CD4-positive, alpha-beta T cell (primary cell): ENCODE measurements at regions of chr12 and their contacts with region 1.

Region 1: DNA sequence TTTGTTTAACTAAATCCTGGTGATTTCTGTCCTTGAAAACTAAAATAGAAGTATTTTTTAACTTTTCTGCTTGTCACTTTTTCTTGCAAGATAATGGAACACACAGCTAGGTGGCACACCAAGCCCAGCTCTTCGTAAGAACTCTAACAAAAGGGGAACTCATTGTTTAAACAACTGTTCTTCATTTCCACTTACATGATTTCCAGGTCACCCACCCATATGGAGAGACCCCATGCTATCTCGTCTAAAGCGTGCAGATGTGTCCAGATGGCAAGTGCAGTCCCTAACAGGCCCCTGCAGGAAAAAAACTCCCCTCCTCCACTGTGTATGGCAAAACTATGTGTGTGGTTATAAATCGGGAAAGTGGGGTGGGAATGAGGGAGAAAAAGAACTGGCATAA is 43.3 kb upstream of the NT5DC3 start:
- DNase-seq: peak; percentile 17 to 75 (median 37)
- ATAC-seq: peak; percentile 78
- H3K4me3 ChIP-seq: no peak overlapping the region
- H3K4me3 Mint-ChIP-seq: no peak overlapping the region
- H3K27ac ChIP-seq: no peak overlapping the region
- H3K27ac Mint-ChIP-seq: no peak overlapping the region
- H3K4me1 ChIP-seq: peaks cover 2% of the 10 kb centered on the region
- H3K4me1 Mint-ChIP-seq: peaks cover 6% of the 10 kb centered on the region
- H3K27me3 ChIP-seq: no peaks in the 10 kb centered on the region
- H3K27me3 Mint-ChIP-seq: no peaks in the 10 kb centered on the region
- CTCF ChIP-seq: peak; percentile 75

Region 2: DNA sequence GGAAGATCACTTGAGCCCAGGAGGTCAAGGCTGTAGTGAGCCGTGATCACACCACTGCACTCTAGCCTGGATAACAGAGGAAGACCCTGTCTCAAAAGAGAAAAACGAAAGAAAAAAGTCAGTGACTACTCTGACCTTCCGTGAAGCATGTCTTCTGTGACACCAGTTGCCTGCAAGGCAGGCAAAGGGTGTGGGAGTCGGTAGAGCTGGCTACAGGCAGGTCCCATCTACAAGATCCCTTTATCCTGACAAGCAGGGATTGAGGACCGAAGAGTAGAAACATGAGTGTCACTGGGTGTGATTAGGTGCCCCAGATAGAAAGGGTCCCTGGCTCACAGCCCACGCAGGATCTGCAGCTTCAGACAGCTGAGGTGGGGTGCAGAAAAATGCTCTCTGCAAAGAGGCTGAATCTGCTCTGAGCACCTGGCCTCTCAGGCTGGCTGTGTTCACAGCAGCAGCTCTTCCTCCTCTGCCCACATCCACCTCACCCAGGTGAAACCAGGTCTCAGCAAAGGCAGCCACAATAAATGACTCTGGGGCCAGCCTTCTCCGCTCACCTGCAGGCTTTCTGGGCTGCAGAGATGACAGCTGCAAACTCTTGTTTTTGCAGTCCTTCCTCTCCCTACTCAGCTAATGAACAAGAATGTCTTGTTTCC is 17.3 kb after region 1 on chr12:
- CTCF ChIA-PET with region 1: no interaction called
- POLR2A ChIA-PET with region 1: interaction called, 14 read pairs
- intact Hi-C with region 1: no loop called
- DNase-seq: peak; percentile 40 to 79 (median 57)
- ATAC-seq: peak; percentile 96
- H3K4me3 ChIP-seq: peak overlapping the region; percentile 43
- H3K4me3 Mint-ChIP-seq: peak overlapping the region; percentile 70
- H3K27ac ChIP-seq: peak overlapping the region; percentile 51 to 68
- H3K27ac Mint-ChIP-seq: peak overlapping the region; percentile 95
- H3K4me1 ChIP-seq: peaks cover 55% of the 10 kb centered on the region
- H3K4me1 Mint-ChIP-seq: peaks cover 76% of the 10 kb centered on the region
- H3K27me3 ChIP-seq: no peaks in the 10 kb centered on the region
- H3K27me3 Mint-ChIP-seq: no peaks in the 10 kb centered on the region
- CTCF ChIP-seq: no peak

Region 3: DNA sequence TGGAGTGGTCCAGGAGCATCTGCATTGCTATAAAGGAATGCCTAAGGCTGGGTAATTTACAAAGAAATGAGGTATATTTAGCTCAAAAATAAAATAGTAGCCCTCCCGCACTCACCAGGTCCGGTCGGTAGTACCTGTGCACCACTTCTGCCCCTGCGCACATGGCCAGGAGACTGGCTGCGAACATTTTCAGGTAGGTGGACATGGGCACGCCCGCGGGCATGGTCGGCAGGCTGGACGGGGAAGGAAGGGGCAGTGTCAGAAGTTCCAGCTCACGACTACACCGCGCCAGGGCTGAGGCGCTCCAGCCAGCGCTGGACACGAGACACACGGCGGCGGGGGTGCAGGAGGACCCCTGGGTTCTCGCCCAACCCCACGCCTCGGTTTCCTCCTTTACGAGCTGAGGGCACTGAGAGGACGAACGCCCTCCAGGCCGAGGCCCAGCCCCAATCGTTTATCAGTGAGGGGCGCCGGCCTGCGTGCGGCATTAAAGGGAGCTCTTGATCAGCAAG is 72.3 kb after region 1 on chr12:
- CTCF ChIA-PET with region 1: no interaction called
- POLR2A ChIA-PET with region 1: no interaction called
- intact Hi-C with region 1: loop called in 1 of 2 experiments (anchors 1 kb)
- DNase-seq: peak in 2 of 14 experiments; percentile 10 to 34
- ATAC-seq: no peak
- H3K4me3 ChIP-seq: peak overlapping the region; percentile 95
- H3K4me3 Mint-ChIP-seq: peak overlapping the region; percentile 99
- H3K27ac ChIP-seq: peak overlapping the region; percentile 64 to 74
- H3K27ac Mint-ChIP-seq: peak overlapping the region; percentile 97
- H3K4me1 ChIP-seq: peaks cover 25% of the 10 kb centered on the region
- H3K4me1 Mint-ChIP-seq: peaks cover 42% of the 10 kb centered on the region
- H3K27me3 ChIP-seq: no peaks in the 10 kb centered on the region
- H3K27me3 Mint-ChIP-seq: no peaks in the 10 kb centered on the region
- CTCF ChIP-seq: no peak